Right ventricle myocardium inferior (tissue), 1 donor: ENCODE measurements at regions of chr11 and their contacts with region 1.

Region 1: GRCh38 chr11:2532704-2533586 is 88.1 kb downstream of the KCNQ1 start:
- DNase-seq: peak; percentile 96
- ATAC-seq: peak; percentile 85

Region 2: DNA sequence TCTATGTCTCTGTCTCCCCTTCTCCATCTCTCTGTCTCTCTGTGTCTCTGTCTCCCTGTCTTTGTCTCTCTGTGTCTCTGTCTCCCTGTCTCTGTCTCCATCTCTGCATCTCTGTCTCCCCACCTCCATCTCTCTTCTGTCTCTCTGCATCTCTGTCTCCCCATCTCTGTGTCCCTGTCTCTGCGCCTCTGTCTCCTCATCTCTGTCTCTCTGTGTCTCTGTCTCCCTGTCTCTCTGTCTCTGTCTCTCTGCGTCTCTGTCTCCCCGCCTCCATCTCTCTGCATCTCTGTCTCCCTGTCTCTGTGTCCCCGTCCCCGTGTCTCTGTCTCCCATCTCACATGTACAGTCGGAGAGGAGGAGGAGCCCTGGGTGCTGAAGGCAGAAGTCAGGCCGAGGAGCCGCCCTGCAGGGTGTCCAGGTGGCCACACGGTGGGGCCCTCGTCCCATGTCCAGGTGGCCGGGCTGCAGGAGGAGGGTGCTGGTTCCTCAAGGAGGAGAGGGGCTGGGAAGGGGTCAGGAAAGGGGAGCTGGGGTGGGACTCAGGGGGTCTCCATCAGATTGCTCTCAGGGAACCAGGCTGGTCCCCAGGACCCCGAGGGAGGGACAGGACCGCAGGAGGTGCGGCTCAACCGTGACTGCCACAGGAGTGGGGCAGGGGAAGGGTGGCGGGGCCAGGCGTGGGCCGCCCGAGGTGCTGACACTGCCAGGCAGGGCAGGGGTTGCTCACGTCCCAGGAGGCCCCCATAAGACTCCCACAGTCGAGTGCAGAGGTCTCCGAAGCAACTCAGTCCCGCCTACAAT is 335.8 kb before region 1 on chr11:
- intact Hi-C with region 1: loop called (anchors 10 kb)
- DNase-seq: peak; percentile 89
- ATAC-seq: peak; percentile 76

Region 3: DNA sequence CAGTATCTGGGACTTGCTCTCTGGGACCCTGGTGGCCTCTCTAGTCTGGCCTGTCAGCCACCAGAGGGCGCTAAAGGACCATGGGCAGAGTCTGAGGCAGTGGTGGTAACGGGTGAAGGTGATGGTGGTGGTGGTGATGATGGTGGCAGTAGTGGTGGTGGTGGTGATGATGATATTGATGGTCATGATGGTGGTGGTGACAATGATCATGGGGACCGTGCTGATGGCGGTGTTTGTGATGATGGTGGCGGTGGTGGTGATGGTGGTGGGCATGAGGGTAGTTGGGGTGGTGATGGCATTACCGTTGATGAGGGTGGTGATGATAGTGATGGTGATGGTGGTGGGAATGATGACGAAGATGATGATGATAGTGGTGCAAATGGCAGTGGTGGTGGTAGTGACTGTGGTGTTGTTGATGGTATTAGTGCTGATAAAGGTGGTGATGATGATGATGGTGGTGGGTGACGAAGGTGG is 104.6 kb before region 1 on chr11:
- intact Hi-C with region 1: loop called (anchors 1 kb)
- DNase-seq: peak; percentile 92
- ATAC-seq: peak; percentile 73

Region 4: GRCh38 chr11:2655834-2656622 is 123.1 kb after region 1 on chr11:
- intact Hi-C with region 1: no loop called
- DNase-seq: no peak
- ATAC-seq: no peak

Region 5: DNA sequence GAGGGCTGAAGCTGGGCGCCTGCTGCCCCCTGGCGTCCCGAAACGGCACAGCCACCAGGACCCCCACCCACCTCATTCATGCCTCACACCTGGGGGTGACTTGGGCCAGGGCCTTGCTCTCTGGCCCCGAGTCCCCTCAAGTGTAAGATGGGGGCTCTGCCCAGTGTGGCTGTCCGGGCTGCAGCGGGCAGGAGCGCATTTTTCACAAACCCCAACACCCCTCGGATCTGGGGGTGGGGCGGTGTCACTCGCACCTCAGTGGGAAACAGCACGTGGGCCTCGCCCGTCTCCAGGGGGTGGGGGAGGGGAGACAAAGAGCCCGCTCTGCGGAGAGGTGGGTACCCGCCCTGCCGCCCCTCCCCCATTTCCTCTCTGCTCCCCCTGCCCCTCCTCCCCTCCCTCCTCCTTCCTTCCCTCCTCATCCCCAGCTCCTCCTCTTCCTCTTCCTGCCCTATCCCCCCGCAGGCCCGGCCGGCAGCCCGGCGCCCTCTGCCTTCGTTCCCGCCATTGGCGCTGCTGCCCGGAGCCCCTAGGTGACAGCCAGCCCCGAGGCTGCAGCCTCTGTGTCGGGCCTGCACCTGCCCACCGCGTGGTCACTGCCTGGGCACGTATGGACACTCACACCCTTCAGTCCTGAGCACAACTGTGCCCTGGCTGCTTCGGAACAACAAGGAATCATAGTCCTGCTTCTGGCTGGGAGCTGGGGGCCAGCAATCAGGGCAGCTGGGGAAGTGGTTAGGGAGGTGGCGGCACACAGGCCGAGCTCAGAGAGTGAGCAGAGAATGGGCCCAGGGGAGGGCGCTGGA is 359.5 kb after region 1 on chr11:
- intact Hi-C with region 1: loop called (anchors 1 kb)
- DNase-seq: peak; percentile 83
- ATAC-seq: peak; percentile 40